Ascending aorta (tissue), 2 donors: ENCODE measurements at regions of chr1 and their contacts with region 1.

Region 1: GRCh38 chr1:211578640-211579433 is at the start of gene SLC30A1:
- DNase-seq: peak; percentile 98 to 100
- H3K4me3 ChIP-seq: peak within 1 kb of the TSS; percentile 61 to 73
- H3K27ac ChIP-seq: peak within 1 kb of the TSS; percentile 92 to 97
- H3K4me1 ChIP-seq: peaks cover 9 to 46% of the 10 kb centered on the region in 2 donors
- H3K27me3 ChIP-seq: no peaks in the 10 kb centered on the region
- CTCF ChIP-seq: no peak
- total RNA-seq, gene SLC30A1: 8.9 TPM

Region 2: GRCh38 chr1:211258756-211259637 is 319.8 kb before region 1 on chr1 and contains the start of gene RCOR3:
- intact Hi-C with region 1: loop called (anchors 2 kb)
- DNase-seq: peak; percentile 66 to 96
- H3K4me3 ChIP-seq: peak within 1 kb of the TSS; percentile 94 to 99
- H3K27ac ChIP-seq: peak within 1 kb of the TSS; percentile 97 to 100
- H3K4me1 ChIP-seq: peaks cover 0 to 21% of the 10 kb centered on the region in 2 donors
- H3K27me3 ChIP-seq: no peaks in the 10 kb centered on the region
- CTCF ChIP-seq: peak in 2 of 3 experiments; percentile 46 to 47
- total RNA-seq, gene RCOR3: 10.3 TPM

Region 3: GRCh38 chr1:211382714-211383480 is 195.9 kb before region 1 on chr1:
- intact Hi-C with region 1: loop called (anchors 5 kb)
- DNase-seq: peak; percentile 59 to 96
- H3K4me3 ChIP-seq: peak overlapping the region; percentile 71 to 96
- H3K27ac ChIP-seq: peak overlapping the region; percentile 93 to 100
- H3K4me1 ChIP-seq: no peaks in the 10 kb centered on the region
- H3K27me3 ChIP-seq: no peaks in the 10 kb centered on the region
- CTCF ChIP-seq: peak in 1 of 3 experiments; percentile 3

Region 4: DNA sequence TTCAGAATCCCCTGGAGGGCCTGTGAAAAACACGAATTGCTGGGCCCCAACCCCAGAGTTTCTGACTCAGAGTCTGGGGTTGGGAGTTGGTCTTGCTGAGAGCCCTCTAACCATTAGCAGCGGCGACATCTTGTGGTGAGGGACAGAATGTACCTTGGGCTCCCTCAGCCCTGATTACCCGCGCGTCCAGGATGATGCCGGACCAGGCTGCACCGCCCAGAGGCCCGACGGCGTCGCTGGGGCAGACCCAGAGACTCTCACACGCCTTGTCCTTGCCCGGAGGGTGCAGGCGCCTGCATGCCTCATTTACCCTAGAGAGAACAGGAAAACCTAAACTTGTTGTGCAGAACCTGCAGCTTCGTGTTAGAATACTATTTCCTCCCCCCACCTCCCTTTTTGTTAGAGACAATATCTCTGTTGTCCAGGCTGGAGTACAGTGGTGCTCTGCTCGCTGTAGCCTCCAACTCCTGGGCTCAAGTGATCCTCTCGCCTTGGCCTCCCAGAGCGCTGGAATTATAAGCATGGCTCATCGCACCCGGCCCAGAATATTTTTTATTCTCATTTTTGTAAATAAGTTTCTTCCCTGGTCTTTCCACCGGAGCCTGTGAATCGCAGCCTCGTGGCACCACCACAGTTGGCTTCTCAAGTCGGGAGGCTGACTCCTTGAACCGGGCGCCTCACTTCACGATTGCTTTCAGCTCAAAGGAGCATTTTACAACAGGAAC is 64.6 kb before region 1 on chr1:
- intact Hi-C with region 1: loop called (anchors 2 kb)
- DNase-seq: peak; percentile 40 to 92
- H3K4me3 ChIP-seq: no peak overlapping the region
- H3K27ac ChIP-seq: peak overlapping the region in 1 of 2 donors; percentile 66
- H3K4me1 ChIP-seq: peaks cover 3 to 15% of the 10 kb centered on the region in 2 donors
- H3K27me3 ChIP-seq: no peaks in the 10 kb centered on the region
- CTCF ChIP-seq: peak; percentile 71 to 88 (median 87)

Region 5: GRCh38 chr1:211613093-211613947 is 34.5 kb after region 1 on chr1:
- intact Hi-C with region 1: loop called (anchors 1 kb)
- DNase-seq: peak; percentile 87 to 96
- H3K4me3 ChIP-seq: no peak overlapping the region
- H3K27ac ChIP-seq: peak overlapping the region; percentile 78 to 84
- H3K4me1 ChIP-seq: peaks cover 6 to 35% of the 10 kb centered on the region in 2 donors
- H3K27me3 ChIP-seq: no peaks in the 10 kb centered on the region
- CTCF ChIP-seq: no peak

Region 6: GRCh38 chr1:211648980-211649934 is 70.4 kb after region 1 on chr1:
- intact Hi-C with region 1: loop called (anchors 1 kb)
- DNase-seq: peak in 1 of 2 donors; percentile 78
- H3K4me3 ChIP-seq: no peak overlapping the region
- H3K27ac ChIP-seq: no peak overlapping the region
- H3K4me1 ChIP-seq: peaks cover 0 to 7% of the 10 kb centered on the region in 2 donors
- H3K27me3 ChIP-seq: no peaks in the 10 kb centered on the region
- CTCF ChIP-seq: peak; percentile 52 to 85 (median 79)

Region 7: GRCh38 chr1:212035123-212035834 is 456.4 kb after region 1 on chr1 and contains the starts of genes DTL and INTS7:
- intact Hi-C with region 1: loop called (anchors 1 kb)
- DNase-seq: peak; percentile 96 to 99
- H3K4me3 ChIP-seq: peak within 1 kb of the TSS; percentile 64 to 78
- H3K27ac ChIP-seq: peak within 1 kb of the TSS; percentile 77 to 85
- H3K4me1 ChIP-seq: peaks cover 0 to 12% of the 10 kb centered on the region in 2 donors
- H3K27me3 ChIP-seq: no peaks in the 10 kb centered on the region
- CTCF ChIP-seq: peak; percentile 85 to 95 (median 90)
- total RNA-seq, gene DTL: not detected
- total RNA-seq, gene INTS7: 10.5 TPM